PC-9 (cell line): ENCODE measurements at regions of chr3 and their contacts with region 1.

Region 1: GRCh38 chr3:25281041-25281731 is 146.9 kb upstream of the RARB start:
- DNase-seq: no peak
- H3K4me3 ChIP-seq: no peak overlapping the region
- H3K27ac ChIP-seq: no peak overlapping the region
- H3K4me1 ChIP-seq: no peaks in the 10 kb centered on the region
- H3K27me3 ChIP-seq: no peaks in the 10 kb centered on the region
- CTCF ChIP-seq: no peak

Region 2: DNA sequence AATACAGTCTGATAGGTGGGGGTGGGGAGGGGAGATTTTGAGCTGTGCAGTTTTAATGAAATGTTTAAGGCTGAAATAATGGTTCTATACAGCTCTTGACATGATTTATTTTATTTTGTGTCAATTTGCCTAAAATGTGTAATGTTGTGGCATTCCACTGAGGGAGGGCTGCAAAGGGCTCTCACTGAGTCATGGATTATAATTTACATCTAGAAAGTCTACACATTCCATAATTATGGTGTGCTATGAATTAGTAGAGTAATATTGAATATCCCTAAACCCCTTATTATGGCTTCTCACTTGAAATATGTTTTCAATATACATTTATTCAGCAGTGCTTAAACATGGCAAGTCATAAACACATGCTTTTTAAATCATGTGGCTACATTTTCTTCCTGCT is 250.8 kb after region 1 on chr3:
- CTCF ChIA-PET with region 1: no interaction called
- POLR2A ChIA-PET with region 1: interaction called, 16 read pairs
- intact Hi-C with region 1: no loop called
- DNase-seq: no peak
- H3K4me3 ChIP-seq: no peak overlapping the region
- H3K27ac ChIP-seq: no peak overlapping the region
- H3K4me1 ChIP-seq: no peaks in the 10 kb centered on the region
- H3K27me3 ChIP-seq: no peaks in the 10 kb centered on the region
- CTCF ChIP-seq: no peak